HEK293T (cell line): ENCODE measurements at regions of chr20 and their contacts with region 1.

Region 1: GRCh38 chr20:34201526-34201925 is 39.7 kb upstream of the ASIP start:
- DNase-seq: no peak

Region 2: GRCh38 chr20:34180460-34181120 is 20.9 kb before region 1 on chr20:
- CTCF ChIA-PET with region 1: interaction called, 14 read pairs
- POLR2A ChIA-PET with region 1: no interaction called
- DNase-seq: no peak